Mammary epithelial cell (primary cell): ENCODE measurements at regions of chr7 and their contacts with region 1.

Region 1: GRCh38 chr7:151519765-151520418 is at the start of gene RHEB:
- DNase-seq: peak; percentile 99
- H3K4me3 ChIP-seq: peak within 1 kb of the TSS; percentile 72 to 87 (median 82)
- H3K27ac ChIP-seq: peak within 1 kb of the TSS; percentile 83
- H3K4me1 ChIP-seq: peaks cover 23% of the 10 kb centered on the region
- H3K27me3 ChIP-seq: no peaks in the 10 kb centered on the region
- CTCF ChIP-seq: no peak
- total RNA-seq, gene RHEB: 57.3 to 105 TPM

Region 2: DNA sequence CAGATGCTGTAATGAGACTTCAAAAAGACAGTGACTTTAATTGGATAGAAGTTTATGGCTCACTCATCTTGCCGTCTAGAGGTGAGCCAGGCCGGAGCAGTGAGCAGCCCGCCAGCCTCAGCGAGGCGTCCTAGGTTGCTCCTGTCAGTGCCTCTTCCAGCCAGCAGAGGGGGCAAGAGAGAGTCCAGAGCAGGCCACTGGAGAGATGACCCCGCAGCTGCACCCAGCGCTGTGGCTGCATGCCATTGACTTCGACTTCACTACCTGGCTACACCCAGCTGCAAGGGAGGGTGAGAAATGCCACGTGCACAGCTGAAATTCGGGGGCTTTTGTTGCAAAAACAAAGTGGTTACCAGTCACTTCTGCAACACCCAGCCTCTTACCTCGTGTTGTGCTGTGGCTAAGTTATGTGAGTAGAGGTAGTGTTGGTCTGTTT is 151.7 kb before region 1 on chr7:
- CTCF ChIA-PET with region 1: no interaction called
- dilution Hi-C with region 1: no loop called
- in situ Hi-C with region 1: no loop called
- intact Hi-C with region 1: loop called (anchors 5 kb)
- DNase-seq: peak; percentile 61
- H3K4me3 ChIP-seq: no peak overlapping the region
- H3K27ac ChIP-seq: no peak overlapping the region
- H3K4me1 ChIP-seq: peaks cover 3% of the 10 kb centered on the region
- H3K27me3 ChIP-seq: no peaks in the 10 kb centered on the region
- CTCF ChIP-seq: peak; percentile 91 to 97

Region 3: DNA sequence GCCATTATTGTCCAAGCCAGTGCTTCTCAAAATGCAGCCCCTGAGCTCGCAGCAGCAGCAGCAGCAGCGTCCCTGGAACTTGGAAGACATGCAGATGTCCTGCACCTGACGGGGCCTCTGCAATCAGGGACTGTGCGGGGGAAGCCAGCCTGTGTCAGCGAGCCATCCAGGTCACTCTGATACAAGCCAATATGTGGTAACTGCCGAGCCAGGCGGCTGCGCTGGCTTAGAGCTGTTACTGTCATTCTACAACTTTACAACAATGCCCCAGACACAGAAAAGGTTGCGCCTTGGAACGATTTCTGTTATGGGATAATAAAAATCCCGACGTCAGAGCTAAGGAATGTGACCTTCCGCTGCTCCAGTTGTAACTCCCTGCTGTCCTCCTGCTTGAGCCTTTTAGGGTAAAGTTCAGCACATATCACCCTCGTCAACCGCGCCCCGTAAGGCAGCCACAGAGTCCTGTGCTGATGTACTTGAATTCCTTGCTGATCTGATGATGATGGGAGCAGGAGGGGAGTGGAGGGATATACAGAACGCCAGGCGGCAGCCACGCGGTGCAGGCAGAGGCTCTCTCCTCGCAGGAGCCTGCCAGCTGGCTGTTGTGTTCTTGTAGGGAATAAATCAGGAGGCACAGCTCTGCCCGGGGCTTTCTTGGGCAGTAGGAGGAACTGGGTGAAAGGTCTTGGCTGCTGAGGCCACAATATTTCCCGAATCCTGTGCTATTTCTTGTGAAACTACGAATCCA is 60.0 kb before region 1 on chr7:
- CTCF ChIA-PET with region 1: no interaction called
- dilution Hi-C with region 1: no loop called
- in situ Hi-C with region 1: no loop called
- intact Hi-C with region 1: loop called (anchors 5 kb)
- DNase-seq: peak; percentile 68
- H3K4me3 ChIP-seq: peak overlapping the region in 2 of 3 experiments; percentile 7 to 19
- H3K27ac ChIP-seq: no peak overlapping the region
- H3K4me1 ChIP-seq: peaks cover 17% of the 10 kb centered on the region
- H3K27me3 ChIP-seq: no peaks in the 10 kb centered on the region
- CTCF ChIP-seq: peak in 1 of 2 donors; percentile 45

Region 4: DNA sequence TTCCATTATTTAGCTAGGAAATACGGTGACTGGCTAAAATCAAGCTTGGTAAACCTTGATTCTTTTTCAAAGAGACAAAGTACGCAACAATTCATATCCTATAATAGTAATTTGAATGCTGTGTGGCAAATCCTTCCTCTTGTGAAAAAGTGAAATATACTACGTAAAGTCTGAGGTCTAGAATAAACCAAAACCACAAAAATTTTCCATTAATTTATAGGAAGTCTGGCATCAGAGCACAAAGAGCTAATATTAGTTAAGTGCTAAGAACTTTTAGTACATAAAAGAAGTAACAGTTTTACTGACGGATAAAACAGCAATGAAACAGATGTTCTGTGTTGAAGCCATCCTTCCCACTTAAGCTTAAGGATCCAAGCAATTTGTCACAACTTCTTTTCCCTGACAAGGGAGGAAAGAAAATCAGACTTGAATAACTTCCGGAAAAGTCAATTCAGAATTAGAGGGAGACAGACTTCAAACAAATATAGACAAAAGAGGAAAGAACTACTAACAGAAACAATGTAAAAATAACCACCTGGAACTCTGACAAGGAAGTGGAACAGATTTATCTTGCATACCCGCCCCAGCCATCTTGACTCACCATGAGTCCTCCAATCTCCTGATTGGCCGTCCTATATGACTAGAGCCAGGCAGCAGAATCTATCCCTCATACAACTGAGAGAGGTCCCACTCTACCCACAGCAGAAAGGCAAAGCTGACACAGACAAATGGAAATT is 34.8 kb before region 1 on chr7:
- CTCF ChIA-PET with region 1: no interaction called
- dilution Hi-C with region 1: no loop called
- in situ Hi-C with region 1: no loop called
- intact Hi-C with region 1: loop called (anchors 5 kb)
- DNase-seq: peak; percentile 47
- H3K4me3 ChIP-seq: no peak overlapping the region
- H3K27ac ChIP-seq: no peak overlapping the region
- H3K4me1 ChIP-seq: peaks cover 19% of the 10 kb centered on the region
- H3K27me3 ChIP-seq: no peaks in the 10 kb centered on the region
- CTCF ChIP-seq: no peak

Region 5: GRCh38 chr7:151491859-151492258 is 28.0 kb before region 1 on chr7:
- CTCF ChIA-PET with region 1: no interaction called
- dilution Hi-C with region 1: no loop called
- in situ Hi-C with region 1: no loop called
- intact Hi-C with region 1: loop called (anchors 1 kb)
- DNase-seq: peak; percentile 86
- H3K4me3 ChIP-seq: no peak overlapping the region
- H3K27ac ChIP-seq: peak overlapping the region; percentile 25
- H3K4me1 ChIP-seq: peaks cover 23% of the 10 kb centered on the region
- H3K27me3 ChIP-seq: no peaks in the 10 kb centered on the region
- CTCF ChIP-seq: no peak

Region 6: GRCh38 chr7:151550656-151551286 is 30.9 kb after region 1 on chr7:
- CTCF ChIA-PET with region 1: no interaction called
- dilution Hi-C with region 1: no loop called
- in situ Hi-C with region 1: no loop called
- intact Hi-C with region 1: loop called (anchors 2 kb)
- DNase-seq: peak; percentile 77
- H3K4me3 ChIP-seq: no peak overlapping the region
- H3K27ac ChIP-seq: no peak overlapping the region
- H3K4me1 ChIP-seq: peaks cover 20% of the 10 kb centered on the region
- H3K27me3 ChIP-seq: no peaks in the 10 kb centered on the region
- CTCF ChIP-seq: no peak

Region 7: GRCh38 chr7:151631968-151632749 is 112.3 kb after region 1 on chr7:
- CTCF ChIA-PET with region 1: no interaction called
- dilution Hi-C with region 1: no loop called
- in situ Hi-C with region 1: no loop called
- intact Hi-C with region 1: loop called (anchors 5 kb)
- DNase-seq: peak; percentile 78
- H3K4me3 ChIP-seq: peak overlapping the region; percentile 79 to 92 (median 87)
- H3K27ac ChIP-seq: peak overlapping the region; percentile 61
- H3K4me1 ChIP-seq: peaks cover 26% of the 10 kb centered on the region
- H3K27me3 ChIP-seq: no peaks in the 10 kb centered on the region
- CTCF ChIP-seq: peak; percentile 15 to 16

Region 8: GRCh38 chr7:151680721-151681209 is 160.9 kb after region 1 on chr7:
- CTCF ChIA-PET with region 1: no interaction called
- dilution Hi-C with region 1: no loop called
- in situ Hi-C with region 1: no loop called
- intact Hi-C with region 1: no loop called
- DNase-seq: no peak
- H3K4me3 ChIP-seq: no peak overlapping the region
- H3K27ac ChIP-seq: no peak overlapping the region
- H3K4me1 ChIP-seq: peaks cover 19% of the 10 kb centered on the region
- H3K27me3 ChIP-seq: no peaks in the 10 kb centered on the region
- CTCF ChIP-seq: no peak